ENCODE measurements at regions of chr19 and their contacts with region 1.

Region 1: GRCh38 chr19:19489804-19490655 is 25.3 kb downstream of the TSSK6 start:
- DNase-seq: peak; percentile 88
- H3K4me3 ChIP-seq: no peak overlapping the region
- H3K27ac ChIP-seq: peak overlapping the region; percentile 71
- H3K4me1 ChIP-seq: peaks cover 29% of the 10 kb centered on the region
- H3K27me3 ChIP-seq: no peaks in the 10 kb centered on the region
- CTCF ChIP-seq: peak; percentile 70

Region 2: DNA sequence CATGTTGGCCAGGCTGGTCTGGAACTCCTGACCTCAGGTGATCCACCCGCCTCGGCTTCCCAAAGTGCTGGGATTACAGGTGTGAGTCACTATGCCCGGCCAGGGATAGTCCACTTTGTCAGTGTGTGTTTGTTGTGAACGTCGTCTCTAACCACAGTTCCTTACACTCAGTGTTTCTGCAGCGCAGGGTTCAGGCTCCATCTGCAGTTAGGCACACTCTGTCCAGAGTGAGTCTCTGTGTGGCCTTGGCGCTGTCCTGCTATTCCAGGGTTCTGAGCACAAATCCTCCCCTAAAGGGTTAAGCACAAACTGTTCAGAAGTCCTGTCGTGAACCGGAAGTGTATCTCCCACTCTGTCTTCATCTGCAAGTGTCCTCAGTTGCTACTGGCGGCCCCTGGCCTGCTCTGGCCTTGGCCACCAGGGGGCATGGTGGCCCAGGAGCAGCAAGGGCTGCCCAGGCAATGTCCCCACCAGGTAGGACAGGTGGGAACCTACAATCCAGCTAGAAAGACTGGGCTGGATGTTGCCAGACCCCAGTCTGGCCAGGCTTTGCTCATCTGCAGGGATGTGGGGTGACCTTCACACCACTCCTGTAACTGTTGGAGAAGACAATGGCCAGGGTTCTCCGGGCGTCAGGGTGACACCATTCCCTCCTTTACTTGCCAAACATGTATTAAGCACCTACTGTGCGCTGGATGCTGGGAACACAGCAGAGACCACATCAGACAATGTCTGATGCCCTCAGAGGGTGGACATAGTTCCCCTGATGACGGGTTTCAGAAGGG is 123.2 kb before region 1 on chr19:
- intact Hi-C with region 1: loop called (anchors 2 kb)
- DNase-seq: peak; percentile 81
- H3K4me3 ChIP-seq: no peak overlapping the region
- H3K27ac ChIP-seq: peak overlapping the region; percentile 59
- H3K4me1 ChIP-seq: peaks cover 4% of the 10 kb centered on the region
- H3K27me3 ChIP-seq: no peaks in the 10 kb centered on the region
- CTCF ChIP-seq: peak; percentile 99

Region 3: DNA sequence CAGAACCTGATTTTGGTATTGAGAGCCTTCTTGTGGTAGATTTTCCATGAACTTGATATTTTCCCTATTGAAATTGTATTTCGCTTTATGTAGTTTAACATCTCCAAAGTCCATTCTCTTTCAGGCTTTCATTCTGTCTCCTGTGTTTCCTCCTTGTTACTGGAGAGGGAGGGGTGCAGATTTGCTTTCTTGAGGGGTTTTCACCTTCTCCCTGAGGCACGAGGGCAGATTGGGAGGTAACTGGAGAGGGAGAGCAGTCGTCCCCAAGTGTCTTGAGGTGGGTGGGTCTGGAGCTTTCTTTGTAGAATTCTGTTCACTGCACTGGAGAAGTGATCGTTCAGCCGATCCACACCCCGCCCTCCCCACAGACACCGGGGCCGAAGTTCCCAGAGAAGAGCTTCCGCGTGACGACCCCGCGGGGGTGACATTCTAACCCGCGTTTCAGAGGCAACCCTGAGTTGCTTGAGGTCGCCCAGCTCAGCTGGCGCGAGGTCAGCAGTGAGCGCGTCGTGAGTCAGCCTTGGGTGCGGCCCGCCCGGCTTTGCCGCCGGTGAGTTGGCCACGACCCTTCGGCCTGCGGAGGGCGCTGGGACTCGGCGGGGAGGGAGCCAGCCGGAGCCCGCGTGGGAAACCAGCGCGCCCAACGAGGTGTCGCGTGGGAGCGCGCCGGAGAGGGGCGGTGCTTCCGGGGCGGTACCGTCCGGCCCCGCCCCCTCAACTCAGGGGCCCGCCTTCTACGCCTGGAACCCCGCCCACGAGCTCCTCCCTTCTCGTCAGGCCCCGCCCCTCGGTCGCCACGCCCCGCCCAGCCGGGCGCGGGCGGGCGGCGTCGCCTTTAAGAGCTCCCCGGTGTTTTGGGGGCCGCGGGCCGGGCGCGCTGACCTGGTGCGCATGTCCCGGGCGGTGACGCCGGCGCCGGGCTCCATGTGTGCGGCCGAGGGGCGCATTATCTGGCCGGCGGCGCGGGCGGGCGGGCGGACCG is 84.9 kb before region 1 on chr19 and contains the start of gene GATAD2A:
- intact Hi-C with region 1: loop called (anchors 5 kb)
- DNase-seq: peak; percentile 96
- H3K4me3 ChIP-seq: peak within 1 kb of the TSS; percentile 76
- H3K27ac ChIP-seq: peak within 1 kb of the TSS; percentile 90
- H3K4me1 ChIP-seq: peaks cover 5% of the 10 kb centered on the region
- H3K27me3 ChIP-seq: no peaks in the 10 kb centered on the region
- CTCF ChIP-seq: no peak
- total RNA-seq, gene GATAD2A: 102 to 145 TPM